ENCODE measurements at regions of chr22 and their contacts with region 1.

Region 1: GRCh38 chr22:28014211-28015045 is 95.4 kb upstream of the PITPNB start:
- DNase-seq: peak in 1 of 2 donors; percentile 41
- ATAC-seq: no peak
- H3K4me3 ChIP-seq: no peak overlapping the region
- H3K27ac ChIP-seq: no peak overlapping the region
- H3K4me1 ChIP-seq: peaks cover 14% of the 10 kb centered on the region
- H3K27me3 ChIP-seq: no peaks in the 10 kb centered on the region
- CTCF ChIP-seq: no peak

Region 2: DNA sequence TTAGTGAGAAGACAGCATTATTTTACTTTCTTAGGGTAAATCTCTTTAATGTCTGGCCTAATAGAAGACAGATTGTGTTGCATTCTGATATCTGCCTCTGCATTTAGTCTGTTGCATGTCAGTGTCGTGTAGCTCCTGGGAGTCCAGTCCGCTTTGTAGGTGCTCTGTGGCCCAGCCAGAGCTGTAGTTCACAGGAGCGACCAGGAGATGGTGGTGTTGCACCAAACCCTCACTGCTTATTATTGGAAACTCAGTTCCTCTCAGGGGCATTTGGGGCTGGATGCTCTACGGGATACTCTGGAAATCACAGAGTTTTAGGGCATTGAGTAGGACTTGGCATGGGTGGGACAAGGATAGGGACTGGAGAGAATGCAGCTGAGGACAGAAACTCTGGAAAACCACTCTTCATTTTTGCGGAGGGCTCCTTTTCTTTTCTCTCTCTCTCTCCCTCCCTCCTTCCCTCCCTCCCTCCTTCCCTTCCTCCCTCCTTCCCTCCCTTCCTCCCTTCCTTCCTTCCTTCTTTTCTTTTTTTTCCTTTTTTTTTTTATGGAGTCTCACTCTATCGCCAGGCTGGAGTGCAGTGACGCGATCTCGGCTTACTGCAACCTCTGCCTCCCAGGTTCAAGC is 1335.3 kb before region 1 on chr22:
- intact Hi-C with region 1: loop called in 1 of 2 experiments (anchors 5 kb)
- DNase-seq: peak; percentile 64 to 80
- ATAC-seq: peak; percentile 81 to 92 (median 88)
- H3K4me3 ChIP-seq: no peak overlapping the region
- H3K27ac ChIP-seq: no peak overlapping the region
- H3K4me1 ChIP-seq: peaks cover 12% of the 10 kb centered on the region
- H3K27me3 ChIP-seq: no peaks in the 10 kb centered on the region
- CTCF ChIP-seq: peak; percentile 94

Region 3: GRCh38 chr22:28043266-28043665 is 28.8 kb after region 1 on chr22:
- intact Hi-C with region 1: no loop called
- DNase-seq: no peak
- ATAC-seq: no peak
- H3K4me3 ChIP-seq: no peak overlapping the region
- H3K27ac ChIP-seq: no peak overlapping the region
- H3K4me1 ChIP-seq: no peaks in the 10 kb centered on the region
- H3K27me3 ChIP-seq: no peaks in the 10 kb centered on the region
- CTCF ChIP-seq: no peak